Prostate gland (tissue), 2 donors: ENCODE measurements at regions of chr5 and their contacts with region 1.

Region 1: DNA sequence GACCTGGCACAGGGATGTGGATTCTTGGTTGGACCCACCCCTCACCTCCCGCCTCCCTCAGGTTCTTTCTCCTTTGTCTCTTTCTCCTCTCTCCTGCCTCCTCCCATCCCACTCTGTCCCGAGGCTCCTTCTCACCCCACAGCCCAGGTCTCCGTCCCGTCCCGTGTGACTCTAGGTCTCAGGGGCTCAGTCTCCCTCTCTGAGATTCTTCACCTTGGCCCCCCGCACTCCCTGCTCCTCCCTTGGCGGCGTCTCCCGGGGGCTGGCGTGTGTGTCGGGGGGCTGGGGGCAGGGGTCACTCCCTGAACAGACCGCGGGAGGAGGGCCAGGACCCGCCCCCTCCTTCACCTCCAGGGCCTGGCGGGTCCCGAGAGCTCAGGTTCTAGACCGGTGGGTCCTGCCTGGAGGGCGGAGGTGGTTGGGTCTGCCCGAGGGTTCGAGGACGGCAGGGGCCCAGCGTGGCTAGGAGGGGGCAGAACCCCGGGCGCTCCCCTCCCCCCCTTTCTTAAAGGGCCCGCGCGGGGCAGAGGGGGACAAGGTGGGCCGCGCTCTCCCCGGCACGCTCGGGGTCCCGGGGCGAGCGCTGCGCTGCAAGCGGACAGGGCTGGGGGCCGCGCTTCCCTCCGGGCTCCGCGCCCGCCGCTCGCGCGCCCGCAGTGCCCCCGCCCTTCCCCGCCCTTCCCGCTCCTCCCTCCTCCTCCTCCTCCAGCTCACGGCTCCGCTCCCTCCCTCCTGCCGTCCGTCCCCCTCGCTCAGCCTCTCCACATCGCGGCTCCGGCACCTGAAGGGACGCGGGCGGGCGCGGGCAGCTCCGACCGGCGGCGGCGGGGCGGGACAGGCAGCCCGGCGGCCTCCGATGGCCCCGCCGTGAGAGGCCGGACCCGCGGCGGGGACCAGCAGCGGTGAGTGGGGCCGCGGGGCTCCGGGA is at the start of gene PSD2:
- DNase-seq: peak; percentile 35
- H3K4me3 ChIP-seq: peak within 1 kb of the TSS; percentile 27 to 41
- H3K27ac ChIP-seq: no peak within 1 kb of the TSS
- H3K4me1 ChIP-seq: no peaks in the 10 kb centered on the region
- H3K27me3 ChIP-seq: peaks cover 3% of the 10 kb centered on the region
- CTCF ChIP-seq: no peak
- POLR2A ChIP-seq: no peak
- total RNA-seq, gene PSD2: 0.46 to 0.74 TPM

Region 2: DNA sequence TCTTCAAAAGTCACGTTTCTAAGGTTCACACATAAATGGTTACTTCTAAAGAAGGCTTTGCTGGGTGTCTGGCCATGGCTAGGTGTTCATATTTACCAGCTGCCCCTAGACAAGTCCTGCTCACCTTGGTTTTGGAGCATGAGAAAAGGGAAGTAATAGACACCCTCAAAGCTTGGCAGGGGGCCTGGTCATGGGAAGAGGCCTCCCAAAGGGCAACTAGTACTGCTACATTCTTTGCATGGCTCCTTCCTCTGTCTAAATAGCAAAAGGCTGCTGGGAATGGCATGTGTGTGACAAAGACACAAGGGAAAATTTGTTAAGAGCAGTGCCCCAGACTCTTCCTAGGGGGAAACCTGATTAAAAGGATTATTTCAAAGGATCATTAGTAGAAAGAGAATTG is 154.4 kb after region 1 on chr5:
- intact Hi-C with region 1: loop called (anchors 5 kb)
- DNase-seq: no peak
- H3K4me3 ChIP-seq: no peak overlapping the region
- H3K27ac ChIP-seq: no peak overlapping the region
- H3K4me1 ChIP-seq: no peaks in the 10 kb centered on the region
- H3K27me3 ChIP-seq: no peaks in the 10 kb centered on the region
- CTCF ChIP-seq: no peak
- POLR2A ChIP-seq: no peak